ENCODE measurements at regions of chr2 and their contacts with region 1.

Region 1: GRCh38 chr2:96218508-96219131 is 10.0 kb upstream of the STARD7 start:
- DNase-seq: no peak
- ATAC-seq: peak; percentile 66 to 78
- H3K4me3 ChIP-seq: no peak overlapping the region
- H3K27ac ChIP-seq: peak overlapping the region; percentile 87 to 89 (median 87)
- H3K4me1 ChIP-seq: peaks cover 26 to 32% of the 10 kb centered on the region in 2 donors
- H3K27me3 ChIP-seq: no peaks in the 10 kb centered on the region
- CTCF ChIP-seq: no peak
- POLR2A ChIP-seq: no peak

Region 2: DNA sequence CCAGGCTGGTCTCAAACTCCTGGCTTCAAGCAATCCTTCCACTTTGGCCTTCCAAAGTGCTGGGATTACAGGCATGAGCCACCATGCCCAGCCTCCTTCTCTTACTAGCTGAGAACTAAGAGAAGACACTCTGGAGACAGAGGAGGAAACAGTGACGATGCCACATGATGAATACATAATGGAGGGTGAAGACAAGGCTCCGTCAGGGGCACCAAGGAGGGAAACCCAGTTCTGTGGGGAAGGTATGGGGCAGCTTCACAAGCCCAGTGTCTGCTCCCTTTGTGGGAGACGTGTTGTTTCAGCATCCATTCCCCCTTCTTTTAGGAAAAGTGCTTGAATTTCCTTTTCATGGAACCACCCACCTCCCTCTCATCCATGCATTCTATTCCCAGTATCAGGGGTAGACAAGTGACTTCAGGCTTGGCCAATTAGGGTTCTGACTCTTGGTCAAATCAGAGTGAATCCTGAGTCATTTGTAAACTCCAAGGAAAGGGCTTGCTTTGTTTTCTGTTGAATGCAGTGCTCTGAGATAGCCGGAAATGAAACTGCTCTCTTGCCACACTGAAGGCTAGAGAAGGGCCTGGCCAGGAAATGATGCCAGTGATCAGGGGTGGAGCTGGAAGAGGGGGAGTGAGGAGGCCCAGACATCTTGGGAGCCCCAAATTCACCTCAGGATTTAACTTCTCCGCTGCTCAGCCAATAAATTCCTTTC is 23.4 kb after region 1 on chr2:
- in situ Hi-C with region 1: no loop called
- intact Hi-C with region 1: loop called (anchors 2 kb)
- DNase-seq: no peak
- ATAC-seq: no peak
- H3K4me3 ChIP-seq: no peak overlapping the region
- H3K27ac ChIP-seq: peak overlapping the region; percentile 72 to 86 (median 78)
- H3K4me1 ChIP-seq: peaks cover 70 to 78% of the 10 kb centered on the region in 2 donors
- H3K27me3 ChIP-seq: no peaks in the 10 kb centered on the region
- CTCF ChIP-seq: no peak
- POLR2A ChIP-seq: no peak